Activated T-helper 1 cell treated with anti-CD3 and anti-CD28 coated beads, Interleukin-12 subunit alpha, Interleukin-12 subunit beta, Interleukin-2, Interleukin-4 antibody, amounts not matched to agents 30 ng/mL and 10 ng/mL and 1 ng/mL, durations not matched to agents 14 hours and 24 hours and 36 hours (primary cell): ENCODE measurements at regions of chr7 and their contacts with region 1.

Region 1: GRCh38 chr7:351681-352480 is 61.9 kb downstream of the FOXL3 start:
- DNase-seq: no peak
- H3K4me3 Mint-ChIP-seq: peak overlapping the region; percentile 38
- H3K27ac Mint-ChIP-seq: peak overlapping the region; percentile 6
- H3K4me1 Mint-ChIP-seq: peaks cover 11% of the 10 kb centered on the region
- H3K27me3 Mint-ChIP-seq: peaks cover 8% of the 10 kb centered on the region

Region 2: DNA sequence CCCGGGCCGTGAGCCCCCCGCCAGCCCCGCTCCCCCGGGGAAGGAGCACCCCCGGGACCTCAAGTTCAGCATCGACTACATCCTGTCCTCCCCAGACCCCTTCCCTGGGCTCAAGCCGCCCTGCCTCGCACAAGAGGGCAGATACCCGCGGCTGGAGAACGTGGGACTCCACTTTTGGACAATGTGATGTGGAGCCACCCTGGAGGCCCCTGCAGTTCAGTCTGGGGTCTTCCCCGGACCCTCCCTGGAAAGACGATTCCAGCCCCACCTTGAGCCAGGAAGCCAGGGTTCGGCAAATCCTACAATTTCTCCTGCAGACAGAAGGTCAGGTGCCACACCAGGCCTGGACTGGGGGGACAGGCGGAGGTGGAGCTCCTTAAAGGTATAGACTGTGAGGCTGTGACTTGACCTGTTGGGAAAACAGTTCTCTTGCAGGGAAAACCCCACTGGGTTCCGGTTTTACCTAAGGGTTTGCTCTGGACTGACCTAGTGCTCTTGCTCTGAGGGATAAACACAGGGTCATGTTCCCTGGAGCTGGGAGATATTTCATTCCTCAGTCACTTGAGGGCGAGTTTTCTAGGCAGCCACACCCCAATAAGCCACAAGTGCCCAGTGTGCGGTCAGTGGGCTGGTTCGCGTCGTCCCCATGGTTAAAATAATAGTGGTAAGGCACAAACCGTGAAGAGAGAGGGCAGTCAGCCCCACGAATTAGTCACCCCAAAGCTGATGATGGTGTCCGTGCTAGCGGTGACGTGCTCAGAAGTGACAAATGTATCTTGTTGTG is 60.4 kb before region 1 on chr7:
- intact Hi-C with region 1: no loop called
- DNase-seq: no peak
- H3K4me3 Mint-ChIP-seq: no peak overlapping the region
- H3K27ac Mint-ChIP-seq: no peak overlapping the region
- H3K4me1 Mint-ChIP-seq: no peaks in the 10 kb centered on the region
- H3K27me3 Mint-ChIP-seq: peaks cover 23% of the 10 kb centered on the region

Region 3: DNA sequence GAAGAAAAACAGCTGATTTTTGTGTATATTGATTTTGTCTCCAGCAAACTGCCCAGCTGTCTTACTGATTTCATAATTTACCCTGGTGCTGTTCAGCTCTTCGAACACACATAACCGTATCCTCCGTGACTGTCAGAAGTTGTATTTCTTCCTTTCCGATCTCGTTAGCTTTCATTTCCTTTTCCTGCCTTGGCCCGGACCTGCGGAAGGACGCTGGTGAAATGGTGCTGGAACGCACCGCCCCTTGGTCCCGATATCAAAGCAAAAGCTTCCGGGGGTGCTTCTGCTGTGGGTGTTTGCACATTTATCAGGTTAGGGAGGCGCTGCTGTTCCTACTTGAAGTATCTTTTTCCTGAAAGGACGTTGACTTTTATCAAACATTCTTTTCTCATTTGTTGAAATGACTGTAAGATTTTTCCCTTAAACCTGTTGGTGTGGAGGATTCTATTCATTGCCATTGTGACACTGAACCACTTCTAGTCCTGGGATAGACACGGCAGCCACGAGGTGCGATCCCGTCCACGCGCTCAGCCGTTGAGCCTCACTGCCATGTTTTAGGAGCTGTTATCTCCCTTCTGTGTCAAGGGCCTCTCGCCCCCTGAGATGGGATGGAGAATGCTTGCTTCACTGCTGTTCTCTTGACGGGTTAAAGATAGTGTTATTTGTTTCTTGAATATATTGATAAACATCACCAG is 10.7 kb after region 1 on chr7:
- intact Hi-C with region 1: loop called (anchors 1 kb)
- DNase-seq: peak; percentile 21
- H3K4me3 Mint-ChIP-seq: peak overlapping the region; percentile 48
- H3K27ac Mint-ChIP-seq: peak overlapping the region; percentile 78
- H3K4me1 Mint-ChIP-seq: peaks cover 51% of the 10 kb centered on the region
- H3K27me3 Mint-ChIP-seq: peaks cover 9% of the 10 kb centered on the region